Transverse colon (tissue), 4 donors: ENCODE measurements at regions of chr5 and their contacts with region 1.

Region 1: GRCh38 chr5:153050496-153051179 is 439.8 kb upstream of the GRIA1 start:
- DNase-seq: no peak
- H3K4me3 ChIP-seq: no peak overlapping the region
- H3K27ac ChIP-seq: no peak overlapping the region
- H3K4me1 ChIP-seq: no peaks in the 10 kb centered on the region
- H3K27me3 ChIP-seq: no peaks in the 10 kb centered on the region
- CTCF ChIP-seq: no peak
- EP300 ChIP-seq: no peak
- POLR2A ChIP-seq: no peak

Region 2: DNA sequence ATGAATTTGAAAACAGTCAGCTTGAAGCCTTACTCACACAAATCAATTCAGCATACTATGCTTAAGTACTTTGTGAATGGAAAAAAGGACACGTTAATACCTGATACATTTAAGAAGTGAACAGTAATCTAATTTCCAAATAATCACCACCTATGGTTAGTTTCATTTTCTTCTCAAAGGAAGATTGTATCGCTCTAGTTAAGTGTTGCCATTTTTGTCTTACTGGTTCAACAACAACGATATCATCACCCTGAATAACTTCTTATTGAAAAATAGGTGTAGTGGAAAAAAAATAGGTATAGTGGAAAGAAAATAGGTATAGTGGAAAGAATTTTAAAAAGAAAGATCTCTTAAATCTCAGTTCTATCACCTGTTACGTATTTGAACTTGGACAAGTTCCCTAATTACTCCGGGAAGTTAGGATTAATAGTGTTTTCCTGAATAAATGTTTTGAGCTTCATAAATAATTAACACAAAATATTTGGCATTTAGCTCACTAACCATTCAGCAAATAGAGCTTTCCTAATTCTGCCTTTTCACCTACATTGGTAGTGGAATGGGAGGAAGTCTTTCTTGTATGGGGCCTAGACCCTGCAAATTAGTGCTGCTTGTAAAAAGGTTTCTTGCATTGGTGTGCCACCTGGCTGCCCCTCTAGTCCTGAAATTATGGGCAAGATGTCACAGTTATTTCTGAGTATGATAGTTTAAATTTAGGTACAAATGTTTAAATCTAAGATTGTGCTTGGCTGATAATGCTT is 143.0 kb before region 1 on chr5:
- in situ Hi-C with region 1: no loop called
- intact Hi-C with region 1: no loop called
- DNase-seq: no peak
- H3K4me3 ChIP-seq: no peak overlapping the region
- H3K27ac ChIP-seq: no peak overlapping the region
- H3K4me1 ChIP-seq: no peaks in the 10 kb centered on the region
- H3K27me3 ChIP-seq: no peaks in the 10 kb centered on the region
- CTCF ChIP-seq: no peak
- EP300 ChIP-seq: no peak
- POLR2A ChIP-seq: no peak

Region 3: GRCh38 chr5:153086486-153086885 is 35.8 kb after region 1 on chr5:
- in situ Hi-C with region 1: no loop called
- intact Hi-C with region 1: loop called (anchors 1 kb)
- DNase-seq: no peak
- H3K4me3 ChIP-seq: no peak overlapping the region
- H3K27ac ChIP-seq: no peak overlapping the region
- H3K4me1 ChIP-seq: no peaks in the 10 kb centered on the region
- H3K27me3 ChIP-seq: no peaks in the 10 kb centered on the region
- CTCF ChIP-seq: no peak
- EP300 ChIP-seq: no peak
- POLR2A ChIP-seq: no peak

Region 4: DNA sequence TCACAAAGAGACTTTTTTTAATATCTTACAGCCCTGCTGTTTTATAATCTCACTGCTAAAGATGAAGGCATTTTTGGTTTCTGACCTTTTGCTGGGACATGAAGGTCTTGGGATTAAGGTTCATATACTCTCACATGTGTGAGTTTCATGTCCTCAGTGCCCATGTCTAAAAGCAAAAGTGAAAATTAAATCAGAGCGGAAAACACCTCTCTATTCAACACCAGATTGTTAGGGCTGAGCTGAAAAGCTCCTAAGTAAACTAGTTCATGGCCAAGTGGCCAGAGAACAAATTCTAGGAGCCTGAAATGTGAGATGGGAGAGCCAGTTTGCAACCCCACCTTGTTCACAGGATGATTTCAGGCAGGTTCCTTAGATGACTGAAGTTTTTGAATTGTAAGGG is 550.7 kb after region 1 on chr5:
- in situ Hi-C with region 1: no loop called
- intact Hi-C with region 1: no loop called
- DNase-seq: no peak
- H3K4me3 ChIP-seq: no peak overlapping the region
- H3K27ac ChIP-seq: no peak overlapping the region
- H3K4me1 ChIP-seq: no peaks in the 10 kb centered on the region
- H3K27me3 ChIP-seq: no peaks in the 10 kb centered on the region
- CTCF ChIP-seq: no peak
- EP300 ChIP-seq: no peak
- POLR2A ChIP-seq: no peak